Psoas muscle (tissue), 8 donors: ENCODE measurements at regions of chr3 and their contacts with region 1.

Region 1: GRCh38 chr3:57100046-57100695 is 39.7 kb downstream of the SPATA12 start:
- DNase-seq: peak in 1 of 2 donors; percentile 32
- ATAC-seq: peak; percentile 75 to 91 (median 80)
- H3K4me3 ChIP-seq: no peak overlapping the region
- H3K27ac ChIP-seq: no peak overlapping the region
- H3K4me1 ChIP-seq: peaks cover 3% of the 10 kb centered on the region
- H3K27me3 ChIP-seq: no peaks in the 10 kb centered on the region
- CTCF ChIP-seq: peak; percentile 94

Region 2: GRCh38 chr3:57434041-57434440 is 333.9 kb after region 1 on chr3:
- intact Hi-C with region 1: loop called in 1 of 2 experiments (anchors 10 kb)
- DNase-seq: no peak
- ATAC-seq: peak in 2 of 4 donors; percentile 45 to 71
- H3K4me3 ChIP-seq: no peak overlapping the region
- H3K27ac ChIP-seq: no peak overlapping the region
- H3K4me1 ChIP-seq: no peaks in the 10 kb centered on the region
- H3K27me3 ChIP-seq: no peaks in the 10 kb centered on the region
- CTCF ChIP-seq: peak; percentile 53